HEK293 (cell line): ENCODE measurements at regions of chr2 and their contacts with region 1.

Region 1: GRCh38 chr2:209942936-209943605 is 59.4 kb upstream of the RPE start:
- H3K4me3 ChIP-seq: no peak overlapping the region
- H3K27ac ChIP-seq: no peak overlapping the region
- H3K4me1 ChIP-seq: no peaks in the 10 kb centered on the region
- CTCF ChIP-seq: no peak

Region 2: DNA sequence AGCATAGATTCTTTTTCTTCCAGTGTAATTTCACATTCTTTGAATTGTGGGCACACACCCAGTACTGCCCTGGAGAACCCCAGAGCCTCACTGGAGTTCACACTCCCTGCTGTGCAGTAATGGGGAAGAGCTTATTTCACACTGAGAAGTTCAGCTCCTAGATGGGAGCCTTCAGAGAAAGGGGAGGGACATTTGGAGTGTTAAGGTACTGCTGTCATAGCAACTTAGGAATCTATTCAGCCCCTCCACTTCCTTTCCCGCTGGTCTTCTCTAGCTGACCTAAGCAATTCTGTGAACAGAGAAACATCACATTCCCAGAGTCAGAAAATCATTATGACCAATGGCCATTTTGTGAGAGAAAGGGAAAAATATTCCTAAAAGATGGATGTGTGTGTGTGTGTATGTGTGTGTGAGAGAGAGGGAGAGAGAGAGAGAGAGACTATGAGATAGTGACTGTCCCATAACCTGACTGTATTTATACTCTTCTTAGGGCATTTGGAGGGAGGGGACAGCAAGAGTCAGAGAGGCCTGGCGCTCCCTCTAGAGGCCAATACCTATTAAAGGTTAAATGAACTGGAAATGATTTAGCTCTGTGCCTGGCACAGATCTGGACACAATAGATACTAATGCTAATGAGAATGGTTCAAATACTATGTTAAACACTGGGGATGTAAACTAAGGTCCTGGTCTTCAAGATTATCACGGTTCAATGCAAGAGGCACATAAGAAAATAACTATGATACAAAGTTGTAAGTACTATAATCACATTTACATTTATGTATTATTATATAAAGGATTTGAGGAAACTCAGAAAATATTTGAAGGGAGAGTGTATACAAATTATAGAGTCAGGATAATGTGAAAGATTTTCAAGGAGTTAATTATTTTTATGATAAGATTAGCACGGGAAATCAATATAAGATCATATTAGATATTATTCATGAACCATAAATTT is 17.9 kb after region 1 on chr2:
- CTCF ChIA-PET with region 1: interaction called, 15 read pairs
- POLR2A ChIA-PET with region 1: no interaction called
- H3K4me3 ChIP-seq: no peak overlapping the region
- H3K27ac ChIP-seq: no peak overlapping the region
- H3K4me1 ChIP-seq: no peaks in the 10 kb centered on the region
- CTCF ChIP-seq: peak; percentile 51

Region 3: DNA sequence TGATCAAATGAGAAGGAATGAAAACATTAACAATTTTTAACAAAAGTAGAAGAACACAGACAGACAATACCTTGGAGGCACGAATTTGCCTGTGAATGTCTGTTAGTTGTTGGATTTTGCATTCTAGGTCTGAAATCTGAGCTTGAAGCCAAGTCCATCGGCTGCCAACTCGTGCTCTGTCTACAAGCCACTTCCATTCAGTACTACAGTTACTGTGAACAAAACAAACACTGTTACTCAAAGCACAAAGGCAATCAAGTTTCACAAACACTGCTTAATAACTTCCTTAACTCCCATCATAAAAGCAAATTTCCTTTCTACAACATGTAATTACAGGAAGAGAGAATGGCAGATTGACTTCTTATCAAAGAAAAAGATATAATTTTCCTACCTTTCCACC is 185.9 kb after region 1 on chr2:
- CTCF ChIA-PET with region 1: no interaction called
- POLR2A ChIA-PET with region 1: no interaction called
- H3K4me3 ChIP-seq: no peak overlapping the region
- H3K27ac ChIP-seq: no peak overlapping the region
- H3K4me1 ChIP-seq: no peaks in the 10 kb centered on the region
- CTCF ChIP-seq: no peak